ENCODE measurements at regions of chr11 and their contacts with region 1.

Region 1: DNA sequence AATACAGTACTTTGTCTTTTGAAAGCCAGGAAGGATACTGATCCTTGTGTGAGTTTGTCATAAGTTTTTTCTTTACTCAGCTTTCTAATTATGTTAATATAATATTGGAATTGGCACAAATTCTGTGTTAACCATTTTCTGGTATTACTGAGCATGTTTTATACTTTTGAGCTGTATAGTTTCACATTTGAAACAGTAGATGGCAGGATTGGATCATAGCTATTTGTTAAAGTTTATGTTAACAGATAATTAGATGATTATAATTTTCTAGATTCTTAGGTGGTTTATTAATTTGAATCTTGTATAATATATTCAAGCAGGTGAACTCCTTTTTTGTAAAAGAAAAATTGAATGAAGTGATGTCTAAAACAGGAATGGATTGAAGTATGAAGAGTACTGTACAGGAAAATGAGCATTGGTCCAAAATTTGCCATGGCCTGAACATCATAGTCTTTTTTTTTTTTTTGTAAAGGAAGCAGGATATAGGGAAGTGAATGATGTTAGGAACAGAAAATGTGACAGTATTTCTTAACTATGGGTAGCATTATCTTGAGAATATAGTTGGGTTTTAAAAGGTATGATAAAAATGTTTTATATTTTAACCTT is 102.0 kb downstream of the CYP2R1 start:
- DNase-seq: peak in 1 of 2 donors; percentile 55
- ATAC-seq: peak in 1 of 3 donors; percentile 52
- H3K4me3 ChIP-seq: no peak overlapping the region
- H3K4me3 Mint-ChIP-seq: no peak overlapping the region
- H3K27ac ChIP-seq: no peak overlapping the region
- H3K27ac Mint-ChIP-seq: no peak overlapping the region
- H3K4me1 ChIP-seq: no peaks in the 10 kb centered on the region
- H3K4me1 Mint-ChIP-seq: no peaks in the 10 kb centered on the region
- H3K27me3 ChIP-seq: no peaks in the 10 kb centered on the region
- H3K27me3 Mint-ChIP-seq: no peaks in the 10 kb centered on the region
- CTCF ChIP-seq: peak; percentile 67

Region 2: DNA sequence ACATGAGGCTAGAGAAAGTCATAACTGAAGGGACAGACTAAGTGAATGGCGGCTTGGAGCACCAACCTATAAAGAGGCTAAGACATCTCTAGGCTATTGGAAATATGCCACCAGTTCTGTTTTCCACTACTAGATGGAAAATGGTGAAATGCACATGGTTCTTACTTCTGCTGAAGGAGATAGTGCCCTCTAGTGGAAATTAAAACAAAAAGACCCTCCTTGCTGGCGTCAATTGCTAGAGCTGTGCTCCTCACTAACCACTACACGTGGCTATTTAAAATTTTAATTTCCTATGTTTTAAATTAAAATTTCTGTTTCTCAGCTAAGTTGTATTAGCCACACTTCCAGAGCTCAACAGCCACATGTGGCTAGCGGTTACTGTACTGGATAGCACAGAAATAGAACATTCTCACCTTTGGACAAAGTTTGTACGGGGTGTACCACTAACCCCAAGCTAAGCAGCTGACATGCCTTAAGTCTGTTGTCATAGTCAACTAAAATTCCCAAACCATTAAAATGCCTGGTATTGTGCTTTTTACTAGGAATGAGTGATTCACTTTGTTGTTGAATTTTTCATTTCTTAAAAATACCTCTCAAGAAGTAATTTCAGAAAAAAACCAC is 216.3 kb after region 1 on chr11:
- intact Hi-C with region 1: loop called (anchors 10 kb)
- DNase-seq: peak in 1 of 2 donors; percentile 60
- ATAC-seq: peak; percentile 54 to 64 (median 59)
- H3K4me3 ChIP-seq: no peak overlapping the region
- H3K4me3 Mint-ChIP-seq: no peak overlapping the region
- H3K27ac ChIP-seq: no peak overlapping the region
- H3K27ac Mint-ChIP-seq: no peak overlapping the region
- H3K4me1 ChIP-seq: no peaks in the 10 kb centered on the region
- H3K4me1 Mint-ChIP-seq: no peaks in the 10 kb centered on the region
- H3K27me3 ChIP-seq: peaks cover 29% of the 10 kb centered on the region
- H3K27me3 Mint-ChIP-seq: peaks cover 26 to 59% of the 10 kb centered on the region in 2 donors
- CTCF ChIP-seq: peak; percentile 47

Region 3: GRCh38 chr11:15208378-15209222 is 418.6 kb after region 1 on chr11:
- intact Hi-C with region 1: loop called (anchors 2 kb)
- DNase-seq: peak; percentile 68 to 83
- ATAC-seq: peak; percentile 79 to 98 (median 89)
- H3K4me3 ChIP-seq: no peak overlapping the region
- H3K4me3 Mint-ChIP-seq: no peak overlapping the region
- H3K27ac ChIP-seq: no peak overlapping the region
- H3K27ac Mint-ChIP-seq: no peak overlapping the region
- H3K4me1 ChIP-seq: no peaks in the 10 kb centered on the region
- H3K4me1 Mint-ChIP-seq: no peaks in the 10 kb centered on the region
- H3K27me3 ChIP-seq: no peaks in the 10 kb centered on the region
- H3K27me3 Mint-ChIP-seq: peaks cover 0 to 14% of the 10 kb centered on the region in 2 donors
- CTCF ChIP-seq: peak; percentile 84

Measured in natural killer cell (primary cell).